ENCODE measurements at regions of chr1 and their contacts with region 1.

Region 1: DNA sequence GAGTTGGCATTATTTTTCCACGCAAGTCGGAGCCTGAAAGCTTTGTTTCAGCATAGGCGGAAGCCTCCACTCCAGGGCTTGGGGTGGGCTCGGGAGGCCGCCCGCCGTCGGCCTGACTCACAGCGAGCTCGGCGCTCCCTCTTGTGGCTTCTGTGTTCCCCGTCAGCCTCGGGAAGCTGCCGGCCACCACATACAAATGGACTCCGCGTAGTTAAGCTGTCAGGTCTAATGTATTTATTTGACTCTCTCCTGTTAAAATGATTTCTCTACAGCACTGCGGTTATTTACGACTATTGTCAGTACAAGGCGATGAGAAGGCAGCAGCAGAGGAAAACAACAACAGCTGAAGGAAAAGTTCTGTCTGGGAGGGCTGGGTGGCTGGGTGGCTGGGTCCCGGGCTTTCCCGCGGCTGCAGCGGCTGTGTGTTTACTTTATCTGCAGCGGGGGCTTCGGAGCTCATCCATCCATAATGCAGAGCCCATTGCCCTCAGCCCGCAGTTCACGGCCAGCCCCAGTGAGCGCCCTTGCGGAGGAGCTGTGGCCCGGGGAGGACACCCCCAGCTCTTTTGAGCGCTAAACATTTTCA is 375.7 kb upstream of the CAMK1G start:
- DNase-seq: peak; percentile 83
- H3K4me3 Mint-ChIP-seq: peak overlapping the region; percentile 62
- H3K27ac Mint-ChIP-seq: no peak overlapping the region
- H3K4me1 Mint-ChIP-seq: no peaks in the 10 kb centered on the region
- H3K27me3 Mint-ChIP-seq: peaks cover 6% of the 10 kb centered on the region
- CTCF ChIP-seq: peak; percentile 98

Region 2: GRCh38 chr1:208029381-208030287 is 1178.2 kb before region 1 on chr1:
- CTCF ChIA-PET with region 1: interaction called, 33 read pairs
- POLR2A ChIA-PET with region 1: no interaction called
- intact Hi-C with region 1: no loop called
- DNase-seq: peak; percentile 26
- H3K4me3 Mint-ChIP-seq: no peak overlapping the region
- H3K27ac Mint-ChIP-seq: peak overlapping the region; percentile 21
- H3K4me1 Mint-ChIP-seq: no peaks in the 10 kb centered on the region
- H3K27me3 Mint-ChIP-seq: no peaks in the 10 kb centered on the region
- CTCF ChIP-seq: no peak

Region 3: DNA sequence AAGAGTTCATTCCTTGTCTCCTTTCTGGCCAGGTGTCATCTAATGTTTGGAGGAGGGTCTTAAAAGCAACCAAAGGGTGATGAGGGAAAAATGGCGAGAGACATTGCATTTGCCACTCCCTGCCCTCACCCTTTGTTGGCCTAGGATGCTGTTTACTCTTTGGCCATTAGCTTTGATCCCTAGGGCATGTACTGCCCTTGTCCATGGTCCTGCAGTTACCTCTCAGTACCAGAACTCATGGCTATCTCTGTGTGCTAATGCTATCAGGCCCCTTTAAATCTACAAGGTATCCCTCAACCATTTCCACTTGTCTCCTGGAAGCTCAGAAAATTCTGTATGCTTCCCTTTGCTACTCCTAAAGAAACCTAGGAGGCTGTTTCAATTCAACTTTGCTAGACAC is 538.8 kb before region 1 on chr1:
- CTCF ChIA-PET with region 1: interaction called, 24 read pairs
- POLR2A ChIA-PET with region 1: no interaction called
- intact Hi-C with region 1: no loop called
- DNase-seq: peak; percentile 65
- H3K4me3 Mint-ChIP-seq: no peak overlapping the region
- H3K27ac Mint-ChIP-seq: no peak overlapping the region
- H3K4me1 Mint-ChIP-seq: no peaks in the 10 kb centered on the region
- H3K27me3 Mint-ChIP-seq: peaks cover 39% of the 10 kb centered on the region
- CTCF ChIP-seq: no peak

Region 4: DNA sequence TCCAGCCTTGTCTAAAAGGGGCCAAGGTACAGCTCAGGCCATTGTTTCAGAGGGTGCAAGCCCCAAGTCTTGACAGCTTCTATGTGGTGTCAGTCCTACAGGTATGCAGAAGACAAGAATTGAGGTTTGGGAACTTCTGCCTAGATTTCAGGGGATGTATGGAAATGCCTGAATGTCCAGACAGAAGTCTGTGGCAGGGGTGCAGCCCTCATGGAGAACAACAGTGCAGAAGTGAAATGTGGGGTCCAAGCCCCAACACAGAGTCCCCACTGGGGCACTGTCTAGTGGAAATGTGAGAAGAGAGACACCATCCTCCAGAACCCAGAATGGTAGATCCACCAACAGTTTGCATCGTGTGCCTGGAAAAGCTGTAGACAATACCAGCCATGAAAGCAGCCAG is 24.6 kb before region 1 on chr1:
- CTCF ChIA-PET with region 1: interaction called, 32 read pairs
- POLR2A ChIA-PET with region 1: no interaction called
- intact Hi-C with region 1: no loop called
- DNase-seq: no peak
- H3K4me3 Mint-ChIP-seq: no peak overlapping the region
- H3K27ac Mint-ChIP-seq: no peak overlapping the region
- H3K4me1 Mint-ChIP-seq: no peaks in the 10 kb centered on the region
- H3K27me3 Mint-ChIP-seq: peaks cover 18% of the 10 kb centered on the region
- CTCF ChIP-seq: no peak

Region 5: DNA sequence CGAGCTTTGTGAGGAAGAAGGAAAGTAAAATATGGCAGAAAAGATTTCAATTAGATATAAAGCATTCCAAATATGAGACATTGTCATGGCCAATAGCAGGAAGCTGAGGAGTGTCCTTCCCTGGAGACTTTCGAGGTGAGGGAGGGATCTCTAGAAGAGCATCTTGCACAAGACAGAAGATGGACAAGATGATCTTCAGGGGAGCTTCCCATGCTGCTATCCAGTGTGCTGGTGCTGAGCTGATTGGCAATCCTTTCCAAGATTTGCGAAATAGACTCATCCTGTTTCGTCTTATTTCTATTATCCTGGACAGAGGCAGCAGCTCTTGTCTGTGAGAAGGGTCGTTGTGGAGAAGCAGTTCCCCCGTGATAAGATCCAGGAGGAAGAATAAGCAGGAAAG is 33.7 kb after region 1 on chr1:
- CTCF ChIA-PET with region 1: interaction called, 387 read pairs
- POLR2A ChIA-PET with region 1: interaction called, 12 read pairs
- intact Hi-C with region 1: no loop called
- DNase-seq: peak; percentile 63
- H3K4me3 Mint-ChIP-seq: no peak overlapping the region
- H3K27ac Mint-ChIP-seq: no peak overlapping the region
- H3K4me1 Mint-ChIP-seq: peaks cover 5% of the 10 kb centered on the region
- H3K27me3 Mint-ChIP-seq: peaks cover 14% of the 10 kb centered on the region
- CTCF ChIP-seq: no peak

Region 6: GRCh38 chr1:209354111-209354839 is 146.5 kb after region 1 on chr1:
- CTCF ChIA-PET with region 1: interaction called, 325 read pairs
- POLR2A ChIA-PET with region 1: interaction called, 19 read pairs
- intact Hi-C with region 1: loop called (anchors 1 kb)
- DNase-seq: peak; percentile 99
- H3K4me3 Mint-ChIP-seq: peak overlapping the region; percentile 7
- H3K27ac Mint-ChIP-seq: peak overlapping the region; percentile 78
- H3K4me1 Mint-ChIP-seq: peaks cover 41% of the 10 kb centered on the region
- H3K27me3 Mint-ChIP-seq: no peaks in the 10 kb centered on the region
- CTCF ChIP-seq: peak; percentile 98

Region 7: GRCh38 chr1:209505044-209505443 is 297.2 kb after region 1 on chr1:
- CTCF ChIA-PET with region 1: interaction called, 10 read pairs
- POLR2A ChIA-PET with region 1: no interaction called
- intact Hi-C with region 1: no loop called
- DNase-seq: no peak
- H3K4me3 Mint-ChIP-seq: no peak overlapping the region
- H3K27ac Mint-ChIP-seq: no peak overlapping the region
- H3K4me1 Mint-ChIP-seq: no peaks in the 10 kb centered on the region
- H3K27me3 Mint-ChIP-seq: no peaks in the 10 kb centered on the region
- CTCF ChIP-seq: no peak